ENCODE measurements at regions of chr11 and their contacts with region 1.

Region 1: DNA sequence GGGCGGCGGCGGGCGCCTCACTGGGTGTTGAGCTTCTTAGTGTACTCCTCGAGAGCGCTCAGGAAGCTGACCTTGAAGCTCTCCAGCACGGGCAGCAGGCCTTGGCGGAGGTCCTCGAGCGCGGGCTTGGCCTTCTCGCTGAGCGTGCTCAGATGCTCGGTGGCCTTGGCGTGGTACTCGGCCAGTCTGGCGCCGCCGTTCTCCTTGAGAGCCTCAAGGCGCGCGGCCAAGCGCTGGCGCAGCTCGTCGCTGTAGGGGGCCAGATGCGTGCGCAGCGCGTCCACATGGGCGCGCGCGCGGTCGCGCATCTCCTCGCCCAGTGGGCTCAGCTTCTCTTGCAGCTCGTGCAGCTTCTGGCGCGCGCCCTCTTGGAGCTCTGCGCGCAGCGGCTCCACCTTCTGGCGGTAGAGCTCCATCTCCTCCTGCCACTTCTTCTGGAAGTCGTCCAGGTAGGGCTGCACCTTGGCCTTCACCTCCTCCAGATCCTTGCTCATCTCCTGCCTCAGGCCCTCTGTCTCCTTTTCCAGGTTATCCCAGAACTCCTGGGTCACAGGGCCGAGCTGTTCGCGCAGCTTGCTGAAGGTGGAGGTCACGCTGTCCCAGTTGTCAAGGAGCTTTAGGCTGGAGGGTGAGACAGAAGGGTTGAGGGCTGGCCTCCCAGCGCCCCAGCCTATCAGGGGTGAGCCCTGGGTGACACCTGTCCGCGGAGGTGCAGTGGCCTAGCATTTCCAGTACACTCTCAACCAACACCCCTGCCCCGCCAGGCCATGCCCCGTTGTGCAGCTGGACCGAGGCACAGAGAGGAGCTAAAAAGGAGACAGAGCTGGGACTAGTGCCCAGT is 1.4 kb downstream of the APOA1 start:
- DNase-seq: peak; percentile 67 to 79
- H3K4me3 ChIP-seq: no peak overlapping the region
- H3K27ac ChIP-seq: no peak overlapping the region
- H3K4me1 ChIP-seq: peaks cover 8% of the 10 kb centered on the region; the same call in 1 of the 2 replicates
- H3K27me3 ChIP-seq: no peaks in the 10 kb centered on the region
- CTCF ChIP-seq: peak; percentile 68

Region 2: GRCh38 chr11:116787786-116788486 is 48.1 kb before region 1 on chr11 and contains the start of gene ZPR1:
- CTCF ChIA-PET with region 1: interaction called, 16 read pairs
- POLR2A ChIA-PET with region 1: no interaction called
- intact Hi-C with region 1: loop called (anchors 5 kb)
- DNase-seq: peak; percentile 68 to 69
- H3K4me3 ChIP-seq: peak within 1 kb of the TSS; percentile 76
- H3K27ac ChIP-seq: no peak within 1 kb of the TSS; the same call in 1 of the 2 replicates
- H3K4me1 ChIP-seq: peaks cover 17% of the 10 kb centered on the region
- H3K27me3 ChIP-seq: no peaks in the 10 kb centered on the region
- CTCF ChIP-seq: no peak
- total RNA-seq, gene ZPR1: 29.6 and 33.0 TPM in 2 replicates

Region 3: DNA sequence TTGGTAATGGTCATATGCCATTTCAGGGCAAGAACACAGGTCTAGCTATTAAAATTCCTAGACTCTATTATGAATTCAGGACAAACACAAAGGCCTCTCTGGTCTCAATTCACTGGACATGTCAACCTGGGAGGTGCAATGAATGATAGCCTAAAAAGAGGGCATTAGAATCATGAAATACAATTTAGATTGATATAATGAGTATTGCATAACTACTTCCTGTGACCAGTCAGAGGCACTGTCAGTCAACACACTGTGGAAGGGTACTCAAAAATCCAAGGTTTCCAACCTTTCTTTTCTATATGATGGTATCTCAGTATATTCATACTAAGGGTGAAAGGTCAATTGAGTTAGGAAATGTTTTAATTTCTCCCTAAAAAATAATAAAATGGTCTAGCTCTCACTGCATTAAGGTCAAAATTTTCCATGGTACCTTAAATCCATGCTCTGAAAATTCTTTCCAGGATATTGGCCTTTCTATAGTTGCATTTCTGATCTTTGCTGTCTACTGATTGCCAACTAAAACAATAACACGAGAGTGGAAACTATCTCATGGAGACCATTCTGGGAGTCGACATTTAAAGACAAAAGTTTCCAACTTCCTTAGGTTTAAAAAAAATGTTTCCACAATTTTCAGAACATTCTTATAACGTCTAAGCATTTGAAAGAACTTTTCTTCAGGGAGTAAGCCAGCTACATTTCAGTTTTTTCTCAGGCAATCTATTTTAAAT is 83.1 kb after region 1 on chr11:
- CTCF ChIA-PET with region 1: interaction called, 10 read pairs
- POLR2A ChIA-PET with region 1: no interaction called
- intact Hi-C with region 1: no loop called
- DNase-seq: no peak
- H3K4me3 ChIP-seq: no peak overlapping the region
- H3K27ac ChIP-seq: no peak overlapping the region
- H3K4me1 ChIP-seq: no peaks in the 10 kb centered on the region
- H3K27me3 ChIP-seq: no peaks in the 10 kb centered on the region
- CTCF ChIP-seq: no peak

Measured in PC-9 (cell line).